Breast epithelium (tissue), 4 donors: ENCODE measurements at regions of chr3 and their contacts with region 1.

Region 1: GRCh38 chr3:150449169-150449721 is 41.1 kb downstream of the TSC22D2 start:
- DNase-seq: no peak
- H3K4me3 ChIP-seq: no peak overlapping the region
- H3K27ac ChIP-seq: no peak overlapping the region
- H3K4me1 ChIP-seq: no peaks in the 10 kb centered on the region
- H3K27me3 ChIP-seq: no peaks in the 10 kb centered on the region
- CTCF ChIP-seq: no peak
- POLR2A ChIP-seq: no peak

Region 2: GRCh38 chr3:148796793-148797192 is 1652.5 kb before region 1 on chr3:
- intact Hi-C with region 1: no loop called
- DNase-seq: no peak
- H3K4me3 ChIP-seq: no peak overlapping the region
- H3K27ac ChIP-seq: no peak overlapping the region
- H3K4me1 ChIP-seq: no peaks in the 10 kb centered on the region
- H3K27me3 ChIP-seq: no peaks in the 10 kb centered on the region
- CTCF ChIP-seq: no peak
- POLR2A ChIP-seq: no peak

Region 3: GRCh38 chr3:150062492-150062891 is 386.8 kb before region 1 on chr3:
- intact Hi-C with region 1: loop called (anchors 5 kb)
- DNase-seq: no peak
- H3K4me3 ChIP-seq: peak overlapping the region in 2 of 3 donors; percentile 20 to 50
- H3K27ac ChIP-seq: peak overlapping the region; percentile 70 to 80
- H3K4me1 ChIP-seq: no peaks in the 10 kb centered on the region
- H3K27me3 ChIP-seq: peaks cover 0 to 7% of the 10 kb centered on the region in 2 donors
- CTCF ChIP-seq: no peak
- POLR2A ChIP-seq: no peak

Region 4: GRCh38 chr3:152309535-152310307 is 1860.5 kb after region 1 on chr3:
- intact Hi-C with region 1: no loop called
- DNase-seq: no peak
- H3K4me3 ChIP-seq: no peak overlapping the region
- H3K27ac ChIP-seq: peak overlapping the region; percentile 54 to 73
- H3K4me1 ChIP-seq: peaks cover 0 to 17% of the 10 kb centered on the region in 2 donors
- H3K27me3 ChIP-seq: no peaks in the 10 kb centered on the region
- CTCF ChIP-seq: no peak
- POLR2A ChIP-seq: no peak